ENCODE measurements at regions of chr3 and their contacts with region 1.

Region 1: GRCh38 chr3:150220799-150221198 is 187.3 kb upstream of the TSC22D2 start:
- H3K4me3 Mint-ChIP-seq: no peak overlapping the region
- H3K27ac Mint-ChIP-seq: no peak overlapping the region
- H3K4me1 Mint-ChIP-seq: peaks cover 6% of the 10 kb centered on the region
- H3K27me3 Mint-ChIP-seq: peaks cover 24% of the 10 kb centered on the region

Region 2: GRCh38 chr3:149969940-149970715 is 250.7 kb before region 1 on chr3:
- intact Hi-C with region 1: loop called (anchors 5 kb)
- H3K4me3 Mint-ChIP-seq: peak overlapping the region; percentile 76
- H3K27ac Mint-ChIP-seq: no peak overlapping the region
- H3K4me1 Mint-ChIP-seq: peaks cover 20% of the 10 kb centered on the region
- H3K27me3 Mint-ChIP-seq: peaks cover 51% of the 10 kb centered on the region

Region 3: GRCh38 chr3:150022381-150023238 is 198.2 kb before region 1 on chr3:
- intact Hi-C with region 1: no loop called
- H3K4me3 Mint-ChIP-seq: no peak overlapping the region
- H3K27ac Mint-ChIP-seq: no peak overlapping the region
- H3K4me1 Mint-ChIP-seq: no peaks in the 10 kb centered on the region
- H3K27me3 Mint-ChIP-seq: peaks cover 3% of the 10 kb centered on the region

Measured in dendritic cell treated with granulocyte-macrophage colony-stimulating factor and Interleukin-4, amounts not matched to agents 40 ng/mL and 50 ng/mL, for 4 days (primary cell).